Transverse colon (tissue), 4 donors: ENCODE measurements at regions of chr17 and their contacts with region 1.

Region 1: GRCh38 chr17:75289832-75290337 is 652 bp upstream of the SLC25A19 start:
- DNase-seq: peak; percentile 79
- H3K4me3 ChIP-seq: peak overlapping the region; percentile 56 to 74 (median 58)
- H3K27ac ChIP-seq: peak overlapping the region; percentile 94 to 98 (median 96)
- H3K4me1 ChIP-seq: peaks cover 4 to 15% (median 9%) of the 10 kb centered on the region in 4 donors
- H3K27me3 ChIP-seq: no peaks in the 10 kb centered on the region
- CTCF ChIP-seq: peak in 3 of 5 experiments; percentile 13 to 27 (median 21)
- EP300 ChIP-seq: no peak
- POLR2A ChIP-seq: no peak

Region 2: DNA sequence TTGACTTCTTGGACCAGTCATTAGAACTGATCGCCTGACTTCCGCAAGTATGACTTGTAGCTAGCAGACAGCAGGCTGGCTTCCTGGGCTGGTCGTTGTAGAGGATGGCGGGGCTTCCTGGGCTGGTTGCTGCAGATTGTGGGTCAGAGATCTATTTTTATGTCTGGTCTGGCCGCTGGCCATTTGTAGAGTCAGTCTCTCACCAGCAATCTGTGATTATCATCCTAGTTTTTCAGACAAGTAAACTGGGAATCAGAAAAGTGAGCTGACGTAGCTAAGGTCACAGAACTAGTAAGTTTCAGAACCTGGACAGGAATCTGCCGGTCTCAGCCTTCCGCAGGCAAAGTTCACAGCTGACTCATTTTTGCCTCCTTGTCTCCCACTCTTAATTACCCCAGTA is 903.5 kb before region 1 on chr17:
- in situ Hi-C with region 1: no loop called
- intact Hi-C with region 1: no loop called
- DNase-seq: no peak
- H3K4me3 ChIP-seq: no peak overlapping the region
- H3K27ac ChIP-seq: no peak overlapping the region
- H3K4me1 ChIP-seq: peaks cover 0 to 6% (median 5%) of the 10 kb centered on the region in 4 donors
- H3K27me3 ChIP-seq: no peaks in the 10 kb centered on the region
- CTCF ChIP-seq: no peak
- EP300 ChIP-seq: no peak
- POLR2A ChIP-seq: no peak

Region 3: DNA sequence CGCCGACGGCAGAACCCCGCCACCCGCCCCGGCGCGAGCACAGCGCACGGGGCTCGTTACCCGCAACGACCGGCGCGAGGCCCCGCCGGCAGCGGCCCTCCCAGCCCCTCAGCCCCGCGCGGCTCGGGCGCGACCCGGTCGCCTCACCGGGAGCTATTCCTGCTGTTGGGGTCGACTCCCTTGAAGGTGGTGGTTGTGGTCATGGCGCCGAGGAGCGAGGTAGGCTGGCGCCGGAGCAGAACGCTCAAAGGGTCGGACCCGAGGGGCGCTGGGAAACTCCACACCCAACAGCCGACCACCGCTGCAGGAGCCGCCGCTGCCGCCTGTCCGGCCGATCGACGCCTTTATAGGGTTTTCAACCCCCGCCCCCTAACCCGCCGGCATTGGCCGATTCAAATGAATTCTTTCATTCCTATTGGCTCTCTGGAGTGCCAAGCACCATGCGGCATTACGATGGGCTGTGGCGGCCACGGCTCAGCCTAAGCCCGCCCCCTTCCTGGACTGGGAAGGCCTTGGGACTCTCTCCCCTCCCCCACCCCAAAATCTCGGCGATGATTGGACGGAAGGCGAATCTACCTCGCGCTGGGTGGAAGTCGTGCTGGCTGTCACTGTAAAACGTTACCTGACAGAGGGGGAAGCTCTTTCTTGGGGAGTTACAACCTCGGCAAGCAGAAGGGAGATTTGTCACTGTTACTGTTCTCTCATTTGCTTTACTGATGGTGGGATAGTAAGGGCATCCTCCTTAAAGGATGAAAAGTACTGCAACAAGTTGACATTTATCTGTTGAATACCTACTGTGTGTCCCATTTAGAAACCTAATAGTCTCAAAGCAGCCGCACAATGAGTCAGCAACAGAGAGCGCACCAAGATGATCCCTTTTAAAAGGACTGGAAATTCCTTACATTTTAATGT is 135.4 kb before region 1 on chr17 and contains the start of gene JPT1:
- in situ Hi-C with region 1: no loop called
- intact Hi-C with region 1: no loop called
- DNase-seq: peak; percentile 99
- H3K4me3 ChIP-seq: peak within 1 kb of the TSS; percentile 84 to 97 (median 91)
- H3K27ac ChIP-seq: peak within 1 kb of the TSS; percentile 89 to 91 (median 90)
- H3K4me1 ChIP-seq: peaks cover 7 to 21% (median 17%) of the 10 kb centered on the region in 4 donors
- H3K27me3 ChIP-seq: no peaks in the 10 kb centered on the region
- CTCF ChIP-seq: no peak
- EP300 ChIP-seq: no peak
- POLR2A ChIP-seq: peak; percentile 100
- total RNA-seq, gene JPT1: 61.7 to 293 (median 219) TPM

Region 4: DNA sequence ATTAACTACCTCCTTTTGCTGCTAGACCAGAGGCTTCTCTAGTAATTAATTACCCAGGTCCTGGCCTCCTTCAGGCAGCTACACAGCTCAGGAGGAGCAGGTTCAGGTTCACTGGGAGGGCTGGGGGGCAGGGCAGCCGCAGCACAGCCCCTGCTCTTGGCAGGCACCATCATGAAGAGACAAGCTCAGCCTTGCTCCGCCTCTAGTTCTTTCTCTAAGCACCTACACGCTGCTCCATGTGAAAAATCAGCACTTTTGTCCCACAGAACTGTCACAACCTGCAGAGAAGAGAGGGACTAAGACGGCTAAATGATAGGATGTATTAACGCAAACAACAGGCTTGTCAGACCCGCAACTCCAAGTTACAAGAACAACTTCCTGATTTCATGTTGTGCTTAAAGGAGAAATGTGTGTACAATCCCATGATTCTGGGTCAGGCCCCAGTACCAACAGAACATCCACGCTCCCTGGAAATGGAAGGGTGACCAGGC is 62.2 kb after region 1 on chr17:
- in situ Hi-C with region 1: no loop called
- intact Hi-C with region 1: no loop called
- DNase-seq: no peak
- H3K4me3 ChIP-seq: no peak overlapping the region
- H3K27ac ChIP-seq: no peak overlapping the region
- H3K4me1 ChIP-seq: peaks cover 7 to 55% (median 16%) of the 10 kb centered on the region in 4 donors
- H3K27me3 ChIP-seq: no peaks in the 10 kb centered on the region
- CTCF ChIP-seq: no peak
- EP300 ChIP-seq: no peak
- POLR2A ChIP-seq: no peak

Region 5: DNA sequence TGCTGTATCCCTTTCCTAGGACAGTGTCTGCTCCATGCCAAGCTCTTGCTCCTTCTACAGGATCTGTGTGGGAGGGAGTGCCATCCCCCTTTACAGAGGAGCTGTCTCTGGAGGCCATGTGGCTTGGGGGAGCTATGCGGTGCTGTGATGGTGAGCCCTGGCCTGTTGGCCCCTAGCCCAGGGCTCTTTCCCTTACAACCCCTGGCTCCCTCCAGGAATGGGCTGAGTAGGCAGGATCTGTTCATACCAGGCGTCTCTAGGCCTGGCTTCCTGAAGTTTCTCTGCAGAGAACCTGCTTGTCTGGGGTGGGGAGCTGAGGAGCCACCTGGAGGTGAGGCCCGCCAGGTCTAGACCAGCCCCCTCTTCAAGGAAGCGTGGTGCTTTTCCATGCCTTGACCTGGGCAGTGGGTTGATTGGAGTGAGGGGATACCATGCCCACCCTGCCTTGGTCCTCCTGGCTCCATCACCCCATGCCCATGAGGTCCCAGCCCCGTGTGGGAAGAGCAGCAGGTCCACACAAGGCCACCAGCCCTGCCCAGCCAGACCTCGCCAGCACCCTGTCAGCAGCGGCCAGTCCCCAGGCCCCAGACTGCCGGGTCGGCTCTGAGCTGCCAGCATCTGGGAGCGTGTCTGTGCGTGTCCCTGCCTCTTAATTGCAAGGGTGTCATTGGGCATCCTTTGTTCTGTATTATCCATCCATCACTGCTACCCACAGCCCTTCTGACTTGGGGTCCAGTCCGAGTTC is 250.3 kb after region 1 on chr17:
- in situ Hi-C with region 1: no loop called
- intact Hi-C with region 1: no loop called
- DNase-seq: no peak
- H3K4me3 ChIP-seq: no peak overlapping the region
- H3K27ac ChIP-seq: peak overlapping the region; percentile 75 to 91 (median 86)
- H3K4me1 ChIP-seq: peaks cover 12 to 71% (median 45%) of the 10 kb centered on the region in 4 donors
- H3K27me3 ChIP-seq: no peaks in the 10 kb centered on the region
- CTCF ChIP-seq: no peak
- EP300 ChIP-seq: no peak
- POLR2A ChIP-seq: no peak

Region 6: DNA sequence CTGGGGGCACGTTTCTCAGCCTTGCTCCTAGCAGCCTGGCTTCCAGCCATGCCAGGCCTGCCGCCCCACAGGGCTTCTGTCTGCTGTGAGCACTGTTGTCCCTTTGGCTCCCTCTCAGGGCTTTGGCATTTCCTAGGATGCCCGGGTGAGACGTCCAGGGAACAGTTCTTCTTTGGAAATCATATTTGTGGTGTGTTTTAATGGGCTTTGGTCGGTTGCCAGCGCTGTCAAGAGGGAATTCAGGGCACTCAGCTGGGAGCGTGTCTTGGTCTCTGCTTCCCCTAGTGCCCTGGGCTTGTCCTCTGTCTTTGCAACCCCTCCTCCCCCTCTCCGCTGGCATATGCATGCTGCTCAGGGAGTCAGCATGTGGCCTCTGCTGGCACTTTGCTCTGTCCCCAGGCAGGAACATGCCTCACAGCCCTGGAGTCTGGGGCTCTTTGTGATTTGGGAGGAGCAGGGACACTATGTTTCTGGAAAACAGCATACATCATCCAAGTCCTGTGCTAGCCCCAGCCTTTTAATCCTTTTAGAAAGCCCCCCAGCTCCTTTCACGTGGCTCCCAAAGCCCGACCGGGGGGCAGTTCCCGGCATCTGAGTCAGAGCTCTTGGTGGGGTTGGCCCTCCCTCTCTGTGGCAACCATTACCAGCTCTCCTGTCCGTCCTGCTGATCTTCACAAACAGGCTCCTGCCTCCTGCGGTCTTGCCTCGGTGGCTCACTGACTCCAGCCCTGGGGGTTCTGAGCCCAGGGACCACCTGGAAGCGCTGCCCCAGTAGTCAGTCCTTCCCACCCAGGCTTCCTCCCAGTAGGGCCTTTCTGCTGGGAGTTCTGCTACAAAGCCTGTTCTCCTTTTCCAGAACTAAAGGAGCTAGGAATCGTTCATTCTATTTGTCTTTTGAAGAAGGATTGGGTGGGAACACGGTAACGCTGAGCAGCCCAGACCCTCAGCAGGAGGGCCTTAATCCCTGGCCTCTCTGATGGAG is 403.9 kb after region 1 on chr17:
- in situ Hi-C with region 1: no loop called
- intact Hi-C with region 1: loop called (anchors 5 kb)
- DNase-seq: peak; percentile 63
- H3K4me3 ChIP-seq: no peak overlapping the region
- H3K27ac ChIP-seq: peak overlapping the region; percentile 87 to 91 (median 88)
- H3K4me1 ChIP-seq: peaks cover 6 to 79% (median 47%) of the 10 kb centered on the region in 4 donors
- H3K27me3 ChIP-seq: no peaks in the 10 kb centered on the region
- CTCF ChIP-seq: no peak
- EP300 ChIP-seq: no peak
- POLR2A ChIP-seq: no peak